Transverse colon (tissue), 4 donors: ENCODE measurements at regions of chr17 and their contacts with region 1.

Region 1: DNA sequence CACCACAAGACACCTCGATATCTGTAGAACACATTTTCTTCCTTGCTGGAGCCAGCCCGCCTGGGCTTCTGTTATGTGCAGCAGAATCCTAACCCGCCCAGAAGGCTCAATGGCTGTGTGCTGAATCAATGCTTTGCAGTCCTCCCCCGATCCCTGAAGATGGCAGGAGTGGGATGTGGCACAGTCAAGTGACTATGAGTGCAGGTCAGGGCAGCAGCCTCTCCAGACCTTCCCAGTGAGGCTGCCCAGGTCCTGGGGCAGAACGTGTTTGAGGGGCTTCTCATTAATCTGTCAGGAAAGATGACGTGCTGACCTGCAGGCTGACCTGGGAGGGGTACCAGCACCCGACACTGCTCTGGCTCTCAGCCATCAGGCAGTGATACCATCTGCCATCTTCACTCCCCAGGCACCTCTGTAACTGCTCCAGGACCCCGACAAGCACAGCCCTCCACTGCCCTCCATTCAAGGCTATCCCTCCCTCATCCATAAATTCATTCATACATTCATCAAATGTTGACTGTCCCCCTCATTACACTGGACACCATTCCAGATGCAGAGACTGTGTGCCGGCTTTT is 35.2 kb downstream of the LRRC75A start:
- DNase-seq: no peak
- H3K4me3 ChIP-seq: no peak overlapping the region
- H3K27ac ChIP-seq: no peak overlapping the region
- H3K4me1 ChIP-seq: peaks cover 0 to 8% (median 0%) of the 10 kb centered on the region in 4 donors
- H3K27me3 ChIP-seq: no peaks in the 10 kb centered on the region
- CTCF ChIP-seq: no peak
- EP300 ChIP-seq: no peak
- POLR2A ChIP-seq: no peak

Region 2: GRCh38 chr17:16512011-16512410 is 55.2 kb after region 1 on chr17:
- in situ Hi-C with region 1: loop called (anchors 5 to 10 kb)
- intact Hi-C with region 1: no loop called
- DNase-seq: no peak
- H3K4me3 ChIP-seq: no peak overlapping the region
- H3K27ac ChIP-seq: no peak overlapping the region
- H3K4me1 ChIP-seq: peaks cover 0 to 13% (median 6%) of the 10 kb centered on the region in 4 donors
- H3K27me3 ChIP-seq: no peaks in the 10 kb centered on the region
- CTCF ChIP-seq: no peak
- EP300 ChIP-seq: no peak
- POLR2A ChIP-seq: no peak

Region 3: GRCh38 chr17:16568541-16569357 is 111.9 kb after region 1 on chr17 and contains the start of gene ZNF287:
- in situ Hi-C with region 1: no loop called
- intact Hi-C with region 1: no loop called
- DNase-seq: peak; percentile 94
- H3K4me3 ChIP-seq: peak within 1 kb of the TSS; percentile 38 to 77 (median 56)
- H3K27ac ChIP-seq: peak within 1 kb of the TSS; percentile 50 to 76 (median 75)
- H3K4me1 ChIP-seq: peaks cover 0 to 9% (median 6%) of the 10 kb centered on the region in 4 donors
- H3K27me3 ChIP-seq: no peaks in the 10 kb centered on the region
- CTCF ChIP-seq: no peak
- EP300 ChIP-seq: no peak
- POLR2A ChIP-seq: no peak
- total RNA-seq, gene ZNF287: 2.5 to 5.2 (median 2.5) TPM in 3 of 4 donors, not detected in the other

Region 4: GRCh38 chr17:17344462-17345293 is 887.8 kb after region 1 on chr17:
- in situ Hi-C with region 1: no loop called
- intact Hi-C with region 1: no loop called
- DNase-seq: no peak
- H3K4me3 ChIP-seq: no peak overlapping the region
- H3K27ac ChIP-seq: no peak overlapping the region
- H3K4me1 ChIP-seq: no peaks in the 10 kb centered on the region
- H3K27me3 ChIP-seq: no peaks in the 10 kb centered on the region
- CTCF ChIP-seq: no peak
- EP300 ChIP-seq: no peak
- POLR2A ChIP-seq: no peak